CD8-positive, alpha-beta memory T cell (primary cell): ENCODE measurements at regions of chr17 and their contacts with region 1.

Region 1: DNA sequence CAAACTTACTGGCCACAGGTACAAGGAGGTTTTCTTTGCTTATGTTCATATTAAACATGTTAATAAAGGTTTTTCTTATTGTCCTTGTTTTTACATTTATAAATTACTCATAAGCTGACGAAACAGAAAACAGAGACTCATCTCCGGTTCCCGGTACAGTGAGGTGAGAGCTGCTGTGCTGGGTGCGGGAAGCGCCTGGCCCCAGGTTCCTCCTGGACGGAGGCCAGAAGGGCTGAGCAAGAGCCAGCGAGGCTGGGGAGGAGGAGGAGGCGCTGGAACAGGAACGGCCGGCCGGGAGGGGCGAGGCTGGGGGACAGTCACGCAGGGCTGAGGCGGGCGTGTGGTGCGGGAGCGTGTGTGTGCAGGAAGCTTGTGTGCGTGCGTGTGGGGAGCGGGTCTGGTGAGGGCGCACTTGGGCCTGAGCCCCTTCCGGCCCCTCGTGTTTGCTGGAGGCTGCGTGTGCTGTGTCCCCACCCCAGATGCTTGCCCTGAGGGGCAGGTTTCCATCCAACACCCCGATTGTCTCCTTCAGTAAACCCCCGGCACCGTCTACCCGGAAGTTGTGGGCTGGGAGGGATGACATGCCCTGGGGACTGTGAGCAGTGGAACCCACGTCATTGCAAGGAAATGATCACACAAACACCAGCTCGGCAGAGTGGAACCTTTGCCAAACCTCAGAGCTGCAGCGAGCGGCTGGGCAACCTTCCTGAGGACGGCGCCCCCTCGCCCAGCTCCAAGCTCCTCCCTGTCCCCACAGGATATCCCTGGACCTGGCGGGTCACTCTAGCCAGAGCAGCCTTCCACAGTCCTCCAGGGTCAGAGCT is 19.5 kb downstream of the CD7 start:
- DNase-seq: peak; percentile 86 to 98 (median 97)
- H3K4me3 ChIP-seq: peak overlapping the region; percentile 79
- H3K4me3 Mint-ChIP-seq: peak overlapping the region; percentile 91 to 98 (median 96)
- H3K27ac ChIP-seq: peak overlapping the region; percentile 95
- H3K27ac Mint-ChIP-seq: peak overlapping the region; percentile 100
- H3K4me1 ChIP-seq: peaks cover 66% of the 10 kb centered on the region
- H3K4me1 Mint-ChIP-seq: peaks cover 60 to 88% (median 79%) of the 10 kb centered on the region in 3 donors
- H3K27me3 ChIP-seq: no peaks in the 10 kb centered on the region
- H3K27me3 Mint-ChIP-seq: peaks cover 0 to 9% of the 10 kb centered on the region in 2 donors

Region 2: DNA sequence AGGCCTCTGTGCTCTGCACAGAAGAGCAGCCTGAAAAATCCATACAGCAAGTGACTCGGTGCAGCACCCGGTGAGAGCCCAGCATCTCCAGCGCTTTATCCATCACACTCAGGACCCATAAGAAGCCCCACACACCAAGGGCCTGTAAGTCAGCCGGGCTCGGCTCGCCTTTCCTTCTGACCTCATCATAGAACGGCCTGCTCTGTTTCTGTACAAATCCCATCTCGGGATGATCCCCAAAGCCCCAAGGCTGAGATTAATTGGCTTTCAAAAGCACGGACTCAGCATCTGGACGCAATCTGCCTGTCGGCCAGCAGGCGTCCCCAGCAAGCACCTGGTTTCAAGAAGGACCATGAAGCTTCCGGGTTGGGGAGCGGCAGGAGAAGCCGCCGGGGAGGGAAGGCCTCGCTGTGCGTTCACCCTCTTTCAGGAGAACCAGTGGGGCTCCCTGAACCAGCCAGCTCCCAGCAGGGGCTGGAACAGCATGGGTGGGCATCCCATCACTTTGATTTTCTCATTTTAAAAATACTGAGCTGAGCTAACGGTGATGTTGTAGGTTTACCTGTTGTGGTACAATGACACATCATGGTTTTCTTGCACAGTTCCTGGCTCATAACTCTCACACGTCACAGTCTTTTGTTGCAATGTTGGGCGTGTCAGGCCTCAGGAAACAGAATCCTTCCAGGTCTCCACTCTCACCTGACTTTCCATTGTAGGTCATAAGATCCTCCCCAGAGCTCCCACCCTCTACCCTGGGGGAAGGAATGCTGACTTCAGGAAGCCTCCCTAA is 92.0 kb before region 1 on chr17:
- CTCF ChIA-PET with region 1: interaction called, 12 read pairs
- POLR2A ChIA-PET with region 1: interaction called, 6 read pairs
- DNase-seq: peak; percentile 67 to 86 (median 78)
- H3K4me3 ChIP-seq: peak overlapping the region; percentile 30
- H3K4me3 Mint-ChIP-seq: peak overlapping the region; percentile 26 to 79 (median 65)
- H3K27ac ChIP-seq: peak overlapping the region; percentile 69
- H3K27ac Mint-ChIP-seq: peak overlapping the region; percentile 93 to 98 (median 96)
- H3K4me1 ChIP-seq: peaks cover 26% of the 10 kb centered on the region
- H3K4me1 Mint-ChIP-seq: peaks cover 36 to 56% (median 38%) of the 10 kb centered on the region in 3 donors
- H3K27me3 ChIP-seq: no peaks in the 10 kb centered on the region
- H3K27me3 Mint-ChIP-seq: no peaks in the 10 kb centered on the region

Region 3: DNA sequence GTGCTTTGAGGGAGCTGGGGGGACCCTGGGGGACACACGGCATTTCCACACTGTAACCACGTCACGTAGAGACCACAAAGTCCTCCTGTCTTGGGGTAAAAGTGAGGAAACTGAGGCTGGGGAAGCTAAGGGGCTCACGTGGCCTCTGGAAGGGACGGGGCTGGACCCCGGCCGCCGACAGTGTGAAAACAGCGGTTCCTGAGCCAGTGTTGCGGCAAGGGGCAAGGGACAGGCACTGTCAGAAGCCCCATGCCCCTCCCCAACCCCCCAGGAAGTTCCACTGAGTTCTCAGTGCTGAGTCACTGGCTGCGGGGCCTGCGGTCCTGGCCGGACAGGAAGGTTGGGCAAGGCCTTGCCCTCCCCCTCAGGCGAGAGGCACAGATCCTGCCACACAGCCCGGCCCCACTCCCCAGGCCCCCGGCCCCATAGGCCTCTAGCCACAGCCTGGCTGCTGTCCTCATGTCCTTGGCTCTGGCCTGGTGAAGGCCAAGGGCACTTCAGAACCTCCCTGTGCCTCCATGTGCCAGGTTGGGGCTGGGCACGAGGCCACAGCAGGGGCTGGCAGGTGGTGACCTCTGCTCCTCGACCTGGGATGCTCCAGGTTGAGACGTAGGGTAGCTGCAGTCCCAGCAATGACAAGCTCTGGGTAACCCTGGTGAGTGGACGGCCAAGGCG is 80.3 kb before region 1 on chr17:
- CTCF ChIA-PET with region 1: no interaction called
- POLR2A ChIA-PET with region 1: no interaction called
- DNase-seq: no peak
- H3K4me3 ChIP-seq: no peak overlapping the region
- H3K4me3 Mint-ChIP-seq: no peak overlapping the region
- H3K27ac ChIP-seq: peak overlapping the region; percentile 59
- H3K27ac Mint-ChIP-seq: peak overlapping the region in 2 of 8 donors; percentile 17 to 43
- H3K4me1 ChIP-seq: peaks cover 26% of the 10 kb centered on the region
- H3K4me1 Mint-ChIP-seq: peaks cover 17 to 33% (median 24%) of the 10 kb centered on the region in 3 donors
- H3K27me3 ChIP-seq: no peaks in the 10 kb centered on the region
- H3K27me3 Mint-ChIP-seq: peaks cover 0 to 3% of the 10 kb centered on the region in 2 donors

Region 4: DNA sequence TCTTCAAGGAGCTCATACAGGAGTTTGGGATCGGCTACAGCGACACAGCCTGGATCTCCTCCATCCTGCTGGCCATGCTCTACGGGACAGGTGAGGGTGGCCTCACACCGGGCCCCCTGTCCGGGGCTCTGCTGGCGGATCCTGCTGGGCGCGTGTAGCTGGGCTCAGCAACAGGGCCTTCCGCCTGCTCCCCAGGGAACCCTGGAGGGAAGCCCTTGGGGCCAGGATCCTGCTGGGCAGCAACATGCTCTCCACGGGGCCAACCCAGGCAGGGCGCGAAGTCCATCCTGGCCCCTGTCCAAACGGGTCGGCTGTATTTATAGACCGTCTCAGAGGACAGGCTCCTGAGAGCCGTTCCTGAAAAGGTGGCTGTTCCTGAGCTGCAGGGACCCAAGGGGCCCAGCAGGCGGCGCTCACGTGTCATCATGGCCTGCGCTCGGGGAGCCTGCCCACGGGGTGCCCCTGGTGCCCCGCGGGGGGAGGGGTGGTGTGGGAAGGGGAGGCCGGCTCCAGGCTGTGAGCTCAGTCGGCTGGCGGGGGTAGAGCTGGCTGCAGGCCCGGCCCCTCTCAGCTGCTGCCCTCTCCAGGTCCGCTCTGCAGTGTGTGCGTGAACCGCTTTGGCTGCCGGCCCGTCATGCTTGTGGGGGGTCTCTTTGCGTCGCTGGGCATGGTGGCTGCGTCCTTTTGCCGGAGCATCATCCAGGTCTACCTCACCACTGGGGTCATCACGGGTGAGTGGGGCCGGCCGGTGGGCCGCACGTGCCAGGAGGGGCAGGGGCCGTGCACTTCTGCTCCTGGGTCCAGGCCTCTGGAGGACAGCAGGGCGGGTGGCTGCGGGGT is 61.6 kb before region 1 on chr17:
- CTCF ChIA-PET with region 1: interaction called, 71 read pairs
- POLR2A ChIA-PET with region 1: interaction called, 4 read pairs
- DNase-seq: peak; percentile 57 to 78 (median 67)
- H3K4me3 ChIP-seq: no peak overlapping the region
- H3K4me3 Mint-ChIP-seq: peak overlapping the region in 1 of 7 donors; percentile 48
- H3K27ac ChIP-seq: peak overlapping the region; percentile 75
- H3K27ac Mint-ChIP-seq: peak overlapping the region in 6 of 8 donors; percentile 36 to 89 (median 73)
- H3K4me1 ChIP-seq: peaks cover 49% of the 10 kb centered on the region
- H3K4me1 Mint-ChIP-seq: peaks cover 21 to 59% (median 24%) of the 10 kb centered on the region in 3 donors
- H3K27me3 ChIP-seq: no peaks in the 10 kb centered on the region
- H3K27me3 Mint-ChIP-seq: no peaks in the 10 kb centered on the region

Region 5: DNA sequence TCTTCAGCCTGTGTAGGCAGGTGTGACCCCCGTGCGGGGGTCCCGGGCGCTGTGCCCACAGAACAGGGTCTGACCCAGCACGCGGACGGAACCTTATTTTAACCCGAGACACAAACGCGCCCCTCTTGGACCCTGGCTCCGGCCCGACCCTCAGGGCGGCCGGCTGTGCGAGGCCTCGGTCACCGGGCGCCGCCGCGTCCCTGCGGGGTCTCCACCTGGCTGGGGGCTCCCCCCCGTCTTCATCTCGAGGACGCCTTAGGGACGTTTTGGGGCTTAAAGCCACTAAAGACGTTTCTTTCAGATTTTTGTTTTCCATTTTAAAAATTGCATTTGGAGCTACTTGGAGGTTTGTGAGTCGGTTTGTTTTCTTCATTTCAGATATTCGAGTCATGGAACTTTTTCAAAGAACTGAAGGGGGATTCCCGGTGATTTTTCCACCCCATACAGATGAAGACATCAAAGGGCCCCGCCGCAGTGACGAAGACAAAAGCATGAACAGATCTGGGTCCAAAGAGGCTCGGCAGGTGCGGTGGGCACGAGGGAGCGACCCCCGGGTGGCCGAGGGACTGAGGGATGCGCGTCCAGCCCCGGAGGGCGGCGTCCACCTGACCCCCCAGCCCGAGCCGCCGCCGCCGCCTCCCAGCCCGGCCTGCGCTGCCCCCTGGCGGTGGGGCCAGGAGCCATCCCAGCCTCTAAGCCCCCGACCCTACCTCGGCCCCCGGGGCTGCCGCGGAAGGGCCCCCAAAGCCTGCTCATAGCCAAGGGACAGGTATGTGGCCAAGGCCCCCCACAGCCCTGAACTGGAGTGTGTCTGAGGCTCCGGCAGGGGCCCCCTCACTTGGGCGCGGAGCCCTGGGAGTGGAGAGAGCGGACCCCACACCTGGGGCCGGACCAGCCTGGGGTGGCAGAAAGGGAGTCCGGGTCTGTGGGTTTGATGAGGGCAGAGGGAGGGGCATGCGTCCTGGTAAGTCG is 23.3 kb after region 1 on chr17:
- CTCF ChIA-PET with region 1: interaction called, 127 read pairs
- POLR2A ChIA-PET with region 1: interaction called, 37 read pairs
- DNase-seq: peak; percentile 67 to 88 (median 79)
- H3K4me3 ChIP-seq: peak overlapping the region; percentile 53
- H3K4me3 Mint-ChIP-seq: peak overlapping the region; percentile 61 to 88 (median 77)
- H3K27ac ChIP-seq: peak overlapping the region; percentile 38
- H3K27ac Mint-ChIP-seq: peak overlapping the region; percentile 69 to 98 (median 94)
- H3K4me1 ChIP-seq: peaks cover 24% of the 10 kb centered on the region
- H3K4me1 Mint-ChIP-seq: peaks cover 5 to 31% (median 8%) of the 10 kb centered on the region in 3 donors
- H3K27me3 ChIP-seq: no peaks in the 10 kb centered on the region
- H3K27me3 Mint-ChIP-seq: peaks cover 0 to 3% of the 10 kb centered on the region in 2 donors

Region 6: GRCh38 chr17:82424001-82424862 is 126.3 kb after region 1 on chr17:
- CTCF ChIA-PET with region 1: no interaction called
- POLR2A ChIA-PET with region 1: no interaction called
- DNase-seq: peak; percentile 30 to 64 (median 37)
- H3K4me3 ChIP-seq: no peak overlapping the region
- H3K4me3 Mint-ChIP-seq: peak overlapping the region in 1 of 7 donors; percentile 56
- H3K27ac ChIP-seq: no peak overlapping the region
- H3K27ac Mint-ChIP-seq: peak overlapping the region in 2 of 8 donors; percentile 5 to 62
- H3K4me1 ChIP-seq: peaks cover 15% of the 10 kb centered on the region
- H3K4me1 Mint-ChIP-seq: peaks cover 18 to 21% (median 21%) of the 10 kb centered on the region in 3 donors
- H3K27me3 ChIP-seq: no peaks in the 10 kb centered on the region
- H3K27me3 Mint-ChIP-seq: no peaks in the 10 kb centered on the region

Region 7: DNA sequence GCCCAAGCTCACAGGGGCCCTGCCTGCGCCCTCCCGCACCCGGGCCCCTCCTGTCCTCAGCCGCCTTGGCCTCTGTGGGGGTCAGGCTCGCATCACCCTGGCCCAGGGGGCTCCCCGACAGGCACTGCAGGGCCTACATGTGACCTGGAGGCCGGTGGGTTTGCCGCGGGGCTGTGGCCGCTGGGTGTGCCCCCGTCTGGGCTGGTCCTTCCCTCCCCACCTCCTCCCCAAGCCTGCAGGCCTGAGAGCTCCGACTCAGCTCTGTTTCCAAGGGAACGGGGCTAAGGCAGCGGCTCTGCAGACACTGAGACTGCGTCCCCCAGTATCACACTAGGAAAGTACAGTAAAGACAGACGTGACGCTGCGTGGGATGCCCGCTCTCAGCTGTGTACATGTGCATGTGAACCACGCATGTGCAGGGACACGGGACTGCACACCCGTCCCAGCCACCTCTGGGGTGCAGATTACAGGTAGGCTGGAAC is 366.8 kb after region 1 on chr17:
- CTCF ChIA-PET with region 1: no interaction called
- POLR2A ChIA-PET with region 1: no interaction called
- DNase-seq: peak in 1 of 5 donors; percentile 26
- H3K4me3 ChIP-seq: no peak overlapping the region
- H3K4me3 Mint-ChIP-seq: no peak overlapping the region
- H3K27ac ChIP-seq: no peak overlapping the region
- H3K27ac Mint-ChIP-seq: no peak overlapping the region
- H3K4me1 ChIP-seq: no peaks in the 10 kb centered on the region
- H3K4me1 Mint-ChIP-seq: peaks cover 0 to 6% (median 0%) of the 10 kb centered on the region in 3 donors
- H3K27me3 ChIP-seq: no peaks in the 10 kb centered on the region
- H3K27me3 Mint-ChIP-seq: no peaks in the 10 kb centered on the region

Region 8: DNA sequence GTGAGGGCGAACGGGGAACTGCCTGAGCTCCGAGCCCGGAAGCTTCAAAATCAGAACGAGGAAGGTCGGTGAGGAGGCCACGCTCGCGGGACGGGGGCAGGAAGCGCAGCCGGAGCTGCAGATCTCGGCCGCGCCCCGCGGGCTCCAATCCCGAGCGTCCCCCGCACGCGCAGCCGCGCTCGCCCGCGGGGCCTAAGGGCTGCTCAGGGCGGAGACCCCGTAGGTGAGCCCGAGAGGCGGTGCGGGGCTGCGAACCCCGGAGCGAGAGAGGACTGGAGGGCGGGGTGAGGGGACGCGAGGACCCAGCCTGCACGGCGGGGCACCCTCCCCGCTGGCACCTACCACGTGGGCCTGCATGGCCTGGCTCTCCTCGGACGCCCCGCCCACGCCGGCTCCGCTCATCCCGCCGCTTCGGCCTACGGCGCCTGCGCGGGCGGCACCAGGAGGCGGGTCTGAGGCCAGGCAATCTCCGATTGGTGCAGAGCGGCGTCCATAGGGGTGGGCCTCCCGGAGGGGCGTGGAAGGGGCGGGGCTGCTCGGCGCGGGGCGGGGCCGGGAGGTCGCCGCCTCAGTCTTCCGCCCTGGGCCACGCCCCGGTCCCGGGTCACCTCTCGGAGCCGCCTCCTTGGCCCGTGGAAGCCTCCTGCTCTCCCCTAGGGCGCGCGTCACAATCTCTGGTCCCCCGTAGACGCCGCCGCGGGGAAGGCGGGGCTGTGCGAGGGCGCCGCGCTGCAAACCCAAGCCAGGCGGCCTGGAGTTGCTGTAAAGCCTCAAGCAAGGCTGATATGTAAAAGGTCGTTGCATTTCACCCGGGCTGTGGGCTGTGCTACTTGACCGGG is 753.7 kb after region 1 on chr17:
- CTCF ChIA-PET with region 1: no interaction called
- POLR2A ChIA-PET with region 1: no interaction called
- DNase-seq: peak; percentile 95 to 100 (median 99)
- H3K4me3 ChIP-seq: peak overlapping the region; percentile 70
- H3K4me3 Mint-ChIP-seq: peak overlapping the region; percentile 63 to 89 (median 84)
- H3K27ac ChIP-seq: peak overlapping the region; percentile 85
- H3K27ac Mint-ChIP-seq: peak overlapping the region; percentile 90 to 99 (median 94)
- H3K4me1 ChIP-seq: peaks cover 34% of the 10 kb centered on the region
- H3K4me1 Mint-ChIP-seq: peaks cover 30 to 59% (median 31%) of the 10 kb centered on the region in 3 donors
- H3K27me3 ChIP-seq: no peaks in the 10 kb centered on the region
- H3K27me3 Mint-ChIP-seq: peaks cover 0 to 1% of the 10 kb centered on the region in 2 donors